H1 (cell line): ENCODE measurements at regions of chr3 and their contacts with region 1.

Region 1: GRCh38 chr3:161409069-161409468 is 37.8 kb upstream of the SPTSSB start:
- DNase-seq: no peak
- H3K4me3 ChIP-seq: no peak overlapping the region
- H3K27ac ChIP-seq: no peak overlapping the region
- H3K4me1 ChIP-seq: peaks cover 0 to 4% (median 0%) of the 10 kb centered on the region in 4 experiments; a peak in 1 of 7 replicates
- H3K27me3 ChIP-seq: no peaks in the 10 kb centered on the region
- CTCF ChIP-seq: peak in 2 of 3 experiments; percentile 58 to 64; a peak in 3 of 4 replicates
- EP300 ChIP-seq: no peak
- POLR2A ChIP-seq: no peak
- RAD21 ChIP-seq: peak; percentile 80 to 82

Region 2: GRCh38 chr3:161305095-161305991 is 103.7 kb before region 1 on chr3:
- CTCF ChIA-PET with region 1: interaction called, 10 read pairs
- POLR2A ChIA-PET with region 1: no interaction called
- DNase-seq: no peak
- H3K4me3 ChIP-seq: no peak overlapping the region
- H3K27ac ChIP-seq: no peak overlapping the region
- H3K4me1 ChIP-seq: no peaks in the 10 kb centered on the region
- H3K27me3 ChIP-seq: no peaks in the 10 kb centered on the region
- CTCF ChIP-seq: peak in 2 of 3 experiments; percentile 20 to 56; a peak in 2 of 4 replicates
- EP300 ChIP-seq: no peak
- POLR2A ChIP-seq: no peak
- RAD21 ChIP-seq: peak; percentile 36 to 46

Region 3: DNA sequence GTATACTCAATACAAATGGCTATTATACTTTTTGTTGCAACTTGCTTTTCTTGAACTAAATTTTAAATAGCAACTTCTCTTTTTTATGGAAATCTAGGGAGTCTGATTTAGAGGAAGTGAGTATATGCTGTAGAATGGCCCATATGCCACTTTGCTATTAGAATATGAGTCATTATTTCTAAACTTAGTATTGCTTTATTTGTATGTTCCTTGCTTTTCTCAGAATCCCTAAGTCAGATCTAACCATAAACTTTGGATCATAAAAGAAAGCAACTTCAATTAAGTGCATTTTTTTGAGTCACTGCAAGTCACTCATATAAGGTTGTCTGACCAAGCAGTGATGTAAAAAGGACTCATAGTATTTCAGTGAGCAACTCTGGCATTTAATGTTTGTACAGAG is 20.2 kb before region 1 on chr3:
- CTCF ChIA-PET with region 1: interaction called, 10 read pairs
- POLR2A ChIA-PET with region 1: no interaction called
- DNase-seq: no peak
- H3K4me3 ChIP-seq: no peak overlapping the region
- H3K27ac ChIP-seq: no peak overlapping the region
- H3K4me1 ChIP-seq: peaks cover 0 to 2% (median 0%) of the 10 kb centered on the region in 4 experiments; a peak in 1 of 7 replicates
- H3K27me3 ChIP-seq: no peaks in the 10 kb centered on the region
- CTCF ChIP-seq: no peak
- EP300 ChIP-seq: no peak
- POLR2A ChIP-seq: no peak
- RAD21 ChIP-seq: no peak

Region 4: DNA sequence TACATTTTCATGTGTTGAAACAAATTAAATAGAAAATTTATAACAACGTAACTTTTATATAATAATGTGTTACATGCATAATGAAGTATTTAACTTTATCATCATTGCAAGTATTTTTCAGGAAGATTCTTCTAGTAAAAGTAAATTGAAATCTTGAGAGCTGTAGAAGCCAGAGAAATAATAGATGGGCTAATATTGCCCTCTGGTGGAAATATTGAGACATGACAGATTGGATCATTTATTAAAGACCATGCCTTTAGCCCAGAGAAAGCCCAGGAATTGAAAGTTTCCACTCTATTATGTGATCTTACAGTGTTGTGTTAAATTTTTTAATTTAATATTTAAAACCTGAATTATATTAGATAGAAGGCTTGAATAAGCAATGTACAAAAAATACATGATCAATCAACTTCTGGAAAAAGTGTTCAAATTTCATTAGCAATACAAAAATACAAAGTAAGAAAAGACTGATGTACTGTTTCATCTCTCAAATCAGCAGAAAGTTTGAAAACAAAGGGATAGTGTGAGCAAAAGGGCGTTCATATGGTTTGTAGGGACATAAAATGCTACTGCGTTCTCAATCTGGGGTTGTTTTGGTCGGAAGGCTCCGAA is 14.9 kb after region 1 on chr3:
- CTCF ChIA-PET with region 1: interaction called, 13 read pairs
- POLR2A ChIA-PET with region 1: interaction called, 3 read pairs
- DNase-seq: no peak
- H3K4me3 ChIP-seq: no peak overlapping the region
- H3K27ac ChIP-seq: no peak overlapping the region
- H3K4me1 ChIP-seq: peaks cover 3 to 17% (median 13%) of the 10 kb centered on the region in 4 experiments; a peak in 6 of 7 replicates
- H3K27me3 ChIP-seq: no peaks in the 10 kb centered on the region
- CTCF ChIP-seq: peak in 2 of 3 experiments; percentile 23 to 42; a peak in 2 of 4 replicates
- EP300 ChIP-seq: no peak
- POLR2A ChIP-seq: no peak
- RAD21 ChIP-seq: peak; percentile 80 to 86